Heart left ventricle (tissue), 16 donors: ENCODE measurements at regions of chr1 and their contacts with region 1.

Region 1: DNA sequence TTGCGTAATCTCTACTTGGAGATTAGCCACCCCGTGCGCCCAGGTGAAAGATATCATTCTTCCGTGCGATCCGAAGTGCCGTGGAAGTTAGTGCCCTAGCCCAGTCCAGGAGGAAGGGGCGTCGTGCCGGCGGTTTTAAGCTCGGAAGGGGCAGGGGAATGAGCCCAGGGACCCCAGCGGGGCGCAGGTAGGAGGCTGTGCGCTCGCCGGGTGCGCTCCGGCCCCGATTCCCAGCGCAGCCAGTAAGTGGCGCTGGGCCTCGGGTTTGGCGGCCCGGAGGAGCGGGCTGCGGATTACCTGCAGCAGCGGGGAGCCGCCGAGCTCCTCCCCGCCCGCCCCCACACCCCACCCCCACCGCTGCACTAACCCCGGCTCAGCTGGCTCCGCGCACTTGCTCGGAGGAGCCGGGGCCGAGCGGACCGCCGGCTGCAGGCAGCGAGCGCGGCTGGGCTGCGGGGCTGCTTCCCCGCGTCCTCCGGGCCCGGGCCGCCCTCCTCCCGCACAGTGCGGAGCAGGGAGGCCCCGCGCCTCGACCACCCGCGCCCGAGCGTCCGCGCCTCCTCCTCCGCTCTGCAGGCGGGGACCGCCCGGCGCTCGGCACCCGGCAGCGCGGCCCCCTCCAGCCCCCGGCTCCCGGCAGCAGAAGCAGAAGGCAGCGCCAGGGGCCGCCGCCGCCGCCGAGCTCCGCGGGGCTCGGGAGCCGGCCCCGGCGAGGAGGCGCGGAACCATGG is at the start of gene RYR2:
- DNase-seq: peak; percentile 48 to 72 (median 70)
- ATAC-seq: peak; percentile 29 to 73 (median 66)
- H3K4me3 ChIP-seq: peak within 1 kb of the TSS; percentile 54 to 85 (median 72)
- H3K27ac ChIP-seq: peak within 1 kb of the TSS; percentile 82 to 99 (median 96)
- H3K4me1 ChIP-seq: peaks cover 0 to 8% (median 0%) of the 10 kb centered on the region in 12 donors
- H3K27me3 ChIP-seq: peaks cover 0 to 54% (median 11%) of the 10 kb centered on the region in 9 donors
- CTCF ChIP-seq: peak; percentile 27 to 70 (median 57)
- POLR2A ChIP-seq: peak; percentile 69 to 80
- total RNA-seq, gene RYR2: 408 to 1,319 (median 822) TPM

Region 2: DNA sequence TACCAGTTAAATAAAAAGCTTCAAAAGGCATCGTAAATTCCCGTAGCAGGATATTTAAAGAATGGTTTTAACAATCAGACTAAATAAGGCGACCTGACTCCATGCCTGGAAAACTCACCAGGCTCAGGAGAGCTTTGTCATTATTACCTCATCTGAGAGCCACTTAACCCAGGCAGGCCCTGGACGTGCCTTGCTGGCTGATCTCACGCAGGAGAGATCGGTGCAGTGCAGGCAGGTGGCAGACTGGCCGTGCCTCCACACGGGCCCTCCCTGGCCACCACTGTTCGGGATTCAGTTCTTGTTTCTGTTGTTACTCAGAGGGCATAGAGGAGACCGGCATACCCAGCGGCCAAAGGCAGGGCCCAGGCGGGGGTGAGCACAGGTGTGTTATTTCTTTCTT is 44.1 kb before region 1 on chr1:
- intact Hi-C with region 1: loop called in 5 of 10 experiments (anchors 1 to 10 kb)
- DNase-seq: peak; percentile 67 to 89 (median 74)
- ATAC-seq: peak; percentile 88 to 91 (median 90)
- H3K4me3 ChIP-seq: peak overlapping the region in 11 of 12 donors; percentile 7 to 47 (median 35)
- H3K27ac ChIP-seq: peak overlapping the region; percentile 76 to 99 (median 93)
- H3K4me1 ChIP-seq: peaks cover 0 to 25% (median 0%) of the 10 kb centered on the region in 12 donors
- H3K27me3 ChIP-seq: no peaks in the 10 kb centered on the region
- CTCF ChIP-seq: peak in 4 of 12 donors; percentile 2 to 28 (median 16)
- POLR2A ChIP-seq: peak in 1 of 2 donors; percentile 57

Region 3: GRCh38 chr1:237124856-237125462 is 83.0 kb after region 1 on chr1:
- intact Hi-C with region 1: loop called in 1 of 10 experiments (anchors 10 kb)
- DNase-seq: no peak
- ATAC-seq: peak in 2 of 4 donors; percentile 9 to 29
- H3K4me3 ChIP-seq: no peak overlapping the region
- H3K27ac ChIP-seq: peak overlapping the region in 3 of 12 donors; percentile 35 to 48 (median 38)
- H3K4me1 ChIP-seq: peaks cover 0 to 49% (median 8%) of the 10 kb centered on the region in 12 donors
- H3K27me3 ChIP-seq: no peaks in the 10 kb centered on the region
- CTCF ChIP-seq: peak in 11 of 12 donors; percentile 11 to 55 (median 37)
- POLR2A ChIP-seq: no peak

Region 4: GRCh38 chr1:237386362-237387143 is 344.6 kb after region 1 on chr1:
- intact Hi-C with region 1: loop called in 1 of 10 experiments (anchors 10 kb)
- DNase-seq: no peak
- ATAC-seq: no peak
- H3K4me3 ChIP-seq: no peak overlapping the region
- H3K27ac ChIP-seq: no peak overlapping the region
- H3K4me1 ChIP-seq: peaks cover 0 to 50% (median 16%) of the 10 kb centered on the region in 12 donors
- H3K27me3 ChIP-seq: no peaks in the 10 kb centered on the region
- CTCF ChIP-seq: peak; percentile 38 to 71 (median 53)
- POLR2A ChIP-seq: no peak